Right ventricle myocardium inferior (tissue), 1 donor: ENCODE measurements at regions of chr19 and their contacts with region 1.

Region 1: GRCh38 chr19:54115109-54116063 is at the starts of genes PRPF31 and TFPT:
- DNase-seq: peak; percentile 98
- ATAC-seq: peak; percentile 96
- total RNA-seq, gene PRPF31: 39.5 TPM
- total RNA-seq, gene TFPT: 13.4 TPM

Region 2: DNA sequence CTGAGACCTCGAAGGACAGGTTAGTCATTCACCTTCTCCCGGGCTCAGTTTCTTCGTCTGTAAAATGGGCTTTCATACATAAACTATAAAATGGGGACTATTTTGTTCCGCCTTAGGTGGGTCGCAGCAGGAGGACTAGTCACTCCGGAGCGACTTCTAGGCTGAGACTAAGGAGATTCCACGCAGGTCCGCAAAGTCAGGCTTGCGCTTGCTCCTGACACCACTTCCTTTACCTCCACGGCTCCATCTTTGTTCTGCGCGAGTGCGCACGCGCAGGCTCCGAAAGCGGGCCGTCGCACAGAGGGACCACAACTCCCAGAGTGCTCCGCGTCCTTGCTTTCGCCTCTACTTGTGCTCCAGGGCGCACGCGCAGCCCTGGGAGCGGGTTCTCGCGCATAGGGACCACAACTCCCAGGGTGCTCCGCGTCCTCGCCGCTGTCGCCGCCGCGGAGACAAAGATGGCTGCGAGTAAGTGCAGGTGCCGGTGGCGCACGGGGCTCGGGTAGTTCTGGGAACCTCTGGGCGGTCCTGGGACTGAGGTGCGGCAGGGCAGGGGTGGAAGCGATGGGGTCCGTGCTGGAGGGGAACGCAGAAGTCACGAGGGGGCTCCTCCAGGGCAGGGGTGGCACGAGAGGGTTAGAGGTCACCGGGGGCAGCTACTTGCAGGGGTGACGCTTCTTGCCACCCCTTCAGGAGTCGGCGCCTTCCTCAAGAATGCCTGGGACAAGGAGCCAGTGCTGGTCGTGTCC is 12.8 kb before region 1 on chr19 and contains the start of gene NDUFA3:
- intact Hi-C with region 1: loop called (anchors 1 kb)
- DNase-seq: peak; percentile 99
- ATAC-seq: peak; percentile 100
- total RNA-seq, gene NDUFA3: 561 TPM

Region 3: GRCh38 chr19:54137086-54137921 is 21.9 kb after region 1 on chr19 and contains the start of gene CNOT3:
- intact Hi-C with region 1: loop called (anchors 2 kb)
- DNase-seq: peak; percentile 99
- ATAC-seq: peak; percentile 93
- total RNA-seq, gene CNOT3: 17.6 TPM

Region 4: GRCh38 chr19:54189735-54190502 is 74.5 kb after region 1 on chr19:
- intact Hi-C with region 1: loop called (anchors 5 kb)
- DNase-seq: peak; percentile 100
- ATAC-seq: peak; percentile 80